ENCODE measurements at regions of chr9 and their contacts with region 1.

Region 1: DNA sequence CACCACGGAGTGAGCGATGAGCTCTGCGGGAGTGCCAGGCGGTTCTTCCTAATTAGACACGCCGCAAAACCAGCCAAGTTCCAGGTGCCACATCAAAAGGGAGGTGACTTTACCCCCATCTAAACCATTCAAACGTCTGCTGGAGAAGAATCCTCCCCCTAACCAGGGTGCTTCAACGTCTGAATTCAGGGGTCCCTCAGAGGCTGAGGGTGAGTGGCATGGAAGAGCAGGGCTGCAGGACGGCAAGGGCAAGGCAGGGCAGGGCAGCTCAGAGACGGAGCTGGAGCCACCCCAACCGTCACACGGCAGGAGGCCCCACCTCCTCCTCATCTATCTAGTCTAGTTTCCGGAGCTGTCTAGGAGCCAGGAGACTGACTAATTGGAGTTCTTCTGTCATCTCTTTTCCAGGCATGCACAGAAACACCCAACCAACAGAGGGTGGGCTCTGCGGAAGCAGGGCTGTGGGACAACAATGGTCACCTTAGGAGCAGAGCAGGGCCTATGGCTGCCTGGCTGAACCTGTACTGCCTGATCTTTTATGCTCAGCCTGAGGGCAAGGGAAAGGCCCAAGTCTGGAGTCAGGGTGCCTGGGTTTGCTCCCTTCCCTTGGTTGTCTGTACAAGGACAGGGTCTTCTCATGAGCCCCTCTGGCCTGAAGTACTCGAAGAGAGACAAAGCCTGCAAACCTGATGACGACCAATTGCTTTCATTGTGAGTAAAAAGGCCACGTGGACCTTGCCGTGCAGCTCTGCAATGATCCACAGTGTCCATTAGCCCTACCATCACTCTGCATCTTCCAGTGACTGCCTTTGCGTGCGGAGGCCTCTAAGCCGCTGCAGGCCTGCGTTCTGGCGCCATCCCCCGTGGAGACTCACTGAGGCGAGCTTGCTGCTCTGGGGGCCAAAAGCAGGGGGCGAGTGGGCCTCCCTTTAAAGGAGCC is 81.0 kb upstream of the SLC25A51 start:
- DNase-seq: peak; percentile 40
- H3K4me3 ChIP-seq: no peak overlapping the region
- H3K27ac ChIP-seq: peak overlapping the region; percentile 47
- H3K4me1 ChIP-seq: peaks cover 56% of the 10 kb centered on the region
- H3K27me3 ChIP-seq: no peaks in the 10 kb centered on the region
- CTCF ChIP-seq: peak; percentile 22

Region 2: GRCh38 chr9:37953775-37954437 is 31.0 kb before region 1 on chr9:
- intact Hi-C with region 1: loop called (anchors 5 kb)
- DNase-seq: no peak
- H3K4me3 ChIP-seq: no peak overlapping the region
- H3K27ac ChIP-seq: peak overlapping the region; percentile 53
- H3K4me1 ChIP-seq: peaks cover 75% of the 10 kb centered on the region
- H3K27me3 ChIP-seq: no peaks in the 10 kb centered on the region
- CTCF ChIP-seq: no peak